BJ (cell line): ENCODE measurements at regions of chr16 and their contacts with region 1.

Region 1: GRCh38 chr16:2919511-2920255 is 8.0 kb downstream of the FLYWCH1 start:
- DNase-seq: no peak
- H3K4me3 ChIP-seq: no peak overlapping the region
- H3K27me3 ChIP-seq: no peaks in the 10 kb centered on the region
- CTCF ChIP-seq: peak; percentile 82

Region 2: DNA sequence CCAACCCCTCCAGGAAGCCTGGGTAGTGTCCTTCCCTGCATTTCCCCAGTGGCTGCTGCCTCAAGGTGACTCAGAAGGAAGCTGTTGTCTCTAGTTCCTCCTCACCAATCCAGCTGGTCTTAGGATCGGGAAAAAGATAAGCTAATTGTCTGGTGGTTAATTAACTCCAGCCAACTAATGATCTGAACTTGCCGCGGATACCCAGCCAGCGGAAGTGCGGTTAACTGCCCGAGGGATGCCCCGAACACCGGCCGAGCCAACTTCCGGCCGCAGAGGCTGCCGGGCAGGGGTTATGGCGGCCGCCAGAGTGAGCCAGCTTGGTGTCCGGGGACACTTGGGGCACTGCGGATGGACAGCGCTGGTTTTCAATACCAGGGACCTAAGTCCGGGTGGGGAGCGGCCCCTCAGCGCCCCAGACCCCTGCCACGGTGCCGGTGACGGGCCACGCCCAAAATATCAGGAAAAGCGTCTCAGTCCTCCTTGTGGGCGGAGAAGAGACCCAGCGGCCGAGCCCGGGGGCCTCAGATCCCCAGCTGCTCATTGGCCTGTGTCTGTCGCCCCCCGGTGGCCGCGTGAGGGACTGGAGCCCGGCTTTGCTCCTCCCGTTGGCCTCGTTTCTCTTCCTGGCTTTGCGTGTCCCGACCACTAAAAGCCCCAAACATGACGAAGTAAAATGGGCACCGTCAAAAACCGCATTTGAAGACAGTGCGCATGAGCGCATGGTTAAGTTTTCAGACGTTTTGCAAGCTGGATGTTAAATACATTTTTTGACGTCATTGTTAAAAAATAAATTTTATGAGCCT is 51.5 kb before region 1 on chr16:
- CTCF ChIA-PET with region 1: interaction called, 11 read pairs
- POLR2A ChIA-PET with region 1: no interaction called
- DNase-seq: peak; percentile 64
- H3K4me3 ChIP-seq: peak overlapping the region; percentile 63
- H3K27me3 ChIP-seq: no peaks in the 10 kb centered on the region
- CTCF ChIP-seq: peak; percentile 98

Region 3: DNA sequence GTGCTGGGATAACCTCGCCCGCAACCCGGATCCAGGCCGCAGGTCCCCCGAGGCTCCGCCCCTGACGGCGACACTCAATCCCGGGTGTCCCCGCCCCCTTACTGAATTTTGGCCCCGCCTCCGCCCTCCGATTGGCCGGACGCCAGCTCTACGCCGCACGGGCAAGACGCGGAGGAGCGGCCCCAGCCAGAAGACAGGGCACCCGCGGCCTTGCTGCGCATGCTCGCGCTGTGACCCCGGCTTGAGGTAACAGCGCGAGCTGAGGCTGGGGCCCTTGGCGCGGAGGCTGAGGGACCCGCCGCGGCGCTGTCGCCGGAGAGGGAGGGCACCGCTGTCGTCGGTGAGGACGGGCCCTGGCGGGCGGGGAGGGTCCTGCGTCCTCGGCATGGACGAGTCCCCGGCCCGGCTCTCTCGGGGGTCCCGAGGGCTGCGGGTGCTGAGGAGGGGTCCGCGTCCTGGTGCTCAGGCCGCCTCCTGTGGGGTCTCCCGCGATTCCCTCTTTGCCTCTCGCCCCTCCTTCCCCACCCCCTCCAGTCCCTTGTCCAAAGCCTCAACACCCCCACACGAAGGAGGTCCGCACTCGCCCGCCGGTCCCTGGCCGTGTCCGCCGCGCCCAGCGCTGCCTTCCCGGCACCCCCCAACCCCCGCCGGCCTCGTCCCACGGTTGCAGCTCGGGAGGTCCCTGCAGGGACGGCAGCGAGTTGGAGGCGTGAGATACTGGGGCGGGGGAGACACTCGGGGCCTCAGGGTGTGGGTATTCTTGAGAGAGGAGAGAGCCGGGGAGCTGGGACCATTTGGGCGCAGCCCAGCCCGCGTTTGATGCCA is 36.4 kb before region 1 on chr16 and contains the start of gene FLYWCH2:
- CTCF ChIA-PET with region 1: interaction called, 10 read pairs
- POLR2A ChIA-PET with region 1: no interaction called
- DNase-seq: peak; percentile 76
- H3K4me3 ChIP-seq: peak within 1 kb of the TSS; percentile 99
- H3K27me3 ChIP-seq: no peaks in the 10 kb centered on the region; the same call in 1 of the 2 replicates
- CTCF ChIP-seq: no peak
- polyA plus RNA-seq, gene FLYWCH2: 25.6 and 39.9 TPM in 2 replicates

Region 4: GRCh38 chr16:2988590-2989099 is 69.0 kb after region 1 on chr16:
- CTCF ChIA-PET with region 1: no interaction called
- POLR2A ChIA-PET with region 1: no interaction called
- DNase-seq: no peak
- H3K4me3 ChIP-seq: no peak overlapping the region
- H3K27me3 ChIP-seq: peaks cover 6% of the 10 kb centered on the region
- CTCF ChIP-seq: no peak

Region 5: DNA sequence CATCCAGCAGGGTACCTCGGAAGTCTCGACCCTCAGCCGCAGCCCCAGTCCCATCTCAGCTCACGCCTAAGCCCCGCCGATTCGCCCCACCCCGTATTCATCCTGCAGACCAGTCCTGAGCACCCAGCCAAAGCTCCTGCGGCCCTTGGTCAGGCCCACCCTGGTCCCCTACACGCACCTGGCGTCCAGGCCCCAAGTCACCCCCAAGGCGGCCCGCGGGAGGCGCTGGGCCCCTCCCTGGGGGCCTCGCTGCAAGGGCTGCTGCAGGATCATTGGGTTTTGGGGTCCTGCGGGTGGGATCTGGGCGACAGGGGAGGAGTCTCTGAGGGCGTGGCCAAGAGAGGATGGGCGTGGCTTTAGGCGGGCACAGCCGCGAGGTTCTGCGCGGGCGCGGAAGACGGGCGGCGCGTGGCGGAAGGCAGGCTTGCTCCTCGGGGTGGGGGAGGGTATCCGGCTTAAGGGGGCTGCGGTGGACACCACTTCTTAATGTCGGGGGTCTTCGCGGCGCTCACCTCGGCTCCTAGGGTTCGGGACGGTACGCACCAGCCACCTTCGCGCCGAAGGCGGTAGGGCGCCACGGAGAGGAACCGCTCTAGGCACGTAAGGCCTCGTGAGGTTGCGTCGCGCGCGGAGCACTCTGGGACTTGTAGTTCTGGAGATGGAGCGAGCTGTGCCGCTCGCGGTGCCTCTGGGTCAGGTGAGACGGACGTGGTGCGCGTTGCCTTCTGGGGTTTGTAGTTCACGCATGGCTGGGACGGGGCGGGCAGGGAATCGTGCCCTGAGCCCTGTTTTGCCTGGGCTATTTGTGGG is 104.2 kb after region 1 on chr16 and contains the starts of genes HCFC1R1 and THOC6:
- CTCF ChIA-PET with region 1: no interaction called
- POLR2A ChIA-PET with region 1: no interaction called
- DNase-seq: peak; percentile 88
- H3K4me3 ChIP-seq: peak within 1 kb of the TSS; percentile 59
- H3K27me3 ChIP-seq: peaks cover under 1% of the 10 kb centered on the region; the same call in 1 of the 2 replicates
- CTCF ChIP-seq: no peak
- polyA plus RNA-seq, gene HCFC1R1: 26.2 and 33.7 TPM in 2 replicates
- polyA plus RNA-seq, gene THOC6: 11.0 and 20.5 TPM in 2 replicates

Region 6: DNA sequence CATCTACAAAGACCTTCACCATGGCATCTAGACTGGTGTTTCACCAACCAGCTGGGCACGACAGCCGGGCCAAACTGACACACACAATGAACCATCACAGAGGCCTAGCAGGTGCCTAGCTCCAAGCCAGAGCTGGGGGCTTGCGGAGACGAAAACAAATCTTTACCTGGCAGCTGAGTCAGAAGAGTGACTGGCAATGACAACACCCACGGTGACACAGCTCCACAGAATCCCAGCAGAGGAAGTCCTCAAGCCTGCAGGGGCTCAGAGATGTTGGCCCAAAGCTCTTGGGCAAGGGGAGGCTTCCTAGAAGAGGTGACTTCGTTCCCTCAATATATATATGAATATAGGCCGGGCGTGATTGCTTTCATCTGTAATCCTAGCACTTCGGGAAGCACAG is 131.8 kb after region 1 on chr16:
- CTCF ChIA-PET with region 1: no interaction called
- POLR2A ChIA-PET with region 1: no interaction called
- DNase-seq: no peak
- H3K4me3 ChIP-seq: no peak overlapping the region
- H3K27me3 ChIP-seq: peaks cover 20% of the 10 kb centered on the region
- CTCF ChIP-seq: no peak

Region 7: DNA sequence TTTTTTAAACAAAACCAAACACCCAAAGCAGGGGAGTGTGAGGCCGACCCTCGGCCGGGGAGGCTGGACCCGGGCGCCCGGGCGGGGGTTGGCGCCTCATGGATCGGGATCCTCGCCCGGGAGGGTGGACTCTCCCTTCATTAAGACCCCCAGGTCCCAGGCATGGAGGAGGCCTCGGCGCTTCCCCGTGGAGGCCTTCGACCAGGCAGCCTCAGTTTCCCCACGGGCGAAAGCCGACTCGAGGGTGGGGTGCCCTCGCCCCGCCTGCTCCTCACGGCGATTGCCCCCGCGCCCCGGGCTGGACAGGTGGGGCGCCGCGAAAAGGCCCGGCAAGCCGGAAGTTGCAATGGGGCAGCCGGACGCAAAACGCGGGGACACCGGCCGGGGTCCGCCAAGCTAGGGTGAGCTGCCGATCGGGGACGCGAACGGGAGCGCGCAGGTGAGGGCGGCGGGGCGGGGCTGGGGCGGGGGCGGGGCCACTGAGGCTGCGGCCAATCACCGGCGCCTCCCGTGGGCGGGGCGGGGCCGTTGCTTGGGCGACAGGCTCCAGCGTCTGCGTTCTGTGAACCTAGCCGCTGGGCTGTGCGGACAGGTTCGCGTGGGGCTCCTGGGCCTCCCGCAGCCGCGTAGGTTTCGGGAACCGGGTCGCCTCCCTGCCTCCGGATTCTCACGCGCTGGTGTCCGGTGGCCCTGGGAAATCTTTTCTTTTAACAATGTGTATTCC is 186.7 kb after region 1 on chr16:
- CTCF ChIA-PET with region 1: no interaction called
- POLR2A ChIA-PET with region 1: no interaction called
- DNase-seq: no peak
- H3K4me3 ChIP-seq: peak overlapping the region; percentile 75
- H3K27me3 ChIP-seq: no peaks in the 10 kb centered on the region
- CTCF ChIP-seq: no peak